ENCODE measurements at regions of chr1 and their contacts with region 1.

Region 1: DNA sequence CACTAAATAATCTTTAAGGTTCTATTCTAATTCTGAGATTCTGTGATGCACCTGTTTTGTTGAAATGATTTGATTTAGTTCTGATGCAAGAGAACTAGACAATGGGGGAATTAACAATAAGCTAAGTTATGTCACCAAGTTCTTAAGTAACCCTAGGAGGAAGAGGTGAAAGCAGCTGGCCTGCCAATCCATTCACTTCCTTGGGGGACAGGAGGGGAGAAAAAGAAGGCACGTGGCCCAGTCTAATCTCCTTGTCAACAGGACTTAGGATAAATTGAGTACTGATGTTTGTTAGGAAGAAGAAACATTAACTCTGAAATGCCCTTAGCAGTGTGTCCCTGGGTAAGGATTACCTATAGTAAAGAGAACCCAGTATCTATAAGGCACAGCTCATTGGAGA is 36.9 kb downstream of the TLCD4 start:
- DNase-seq: no peak
- H3K27ac ChIP-seq: no peak overlapping the region
- CTCF ChIP-seq: no peak

Region 2: GRCh38 chr1:94843430-94843829 is 310.7 kb before region 1 on chr1:
- CTCF ChIA-PET with region 1: no interaction called
- POLR2A ChIA-PET with region 1: interaction called, 16 read pairs
- DNase-seq: no peak
- H3K27ac ChIP-seq: no peak overlapping the region
- CTCF ChIP-seq: no peak